Cardiac septum (tissue), 1 donor: ENCODE measurements at regions of chr15 and their contacts with region 1.

Region 1: GRCh38 chr15:81225161-81225671 is 28.5 kb downstream of the IL16 start:
- DNase-seq: no peak

Region 2: DNA sequence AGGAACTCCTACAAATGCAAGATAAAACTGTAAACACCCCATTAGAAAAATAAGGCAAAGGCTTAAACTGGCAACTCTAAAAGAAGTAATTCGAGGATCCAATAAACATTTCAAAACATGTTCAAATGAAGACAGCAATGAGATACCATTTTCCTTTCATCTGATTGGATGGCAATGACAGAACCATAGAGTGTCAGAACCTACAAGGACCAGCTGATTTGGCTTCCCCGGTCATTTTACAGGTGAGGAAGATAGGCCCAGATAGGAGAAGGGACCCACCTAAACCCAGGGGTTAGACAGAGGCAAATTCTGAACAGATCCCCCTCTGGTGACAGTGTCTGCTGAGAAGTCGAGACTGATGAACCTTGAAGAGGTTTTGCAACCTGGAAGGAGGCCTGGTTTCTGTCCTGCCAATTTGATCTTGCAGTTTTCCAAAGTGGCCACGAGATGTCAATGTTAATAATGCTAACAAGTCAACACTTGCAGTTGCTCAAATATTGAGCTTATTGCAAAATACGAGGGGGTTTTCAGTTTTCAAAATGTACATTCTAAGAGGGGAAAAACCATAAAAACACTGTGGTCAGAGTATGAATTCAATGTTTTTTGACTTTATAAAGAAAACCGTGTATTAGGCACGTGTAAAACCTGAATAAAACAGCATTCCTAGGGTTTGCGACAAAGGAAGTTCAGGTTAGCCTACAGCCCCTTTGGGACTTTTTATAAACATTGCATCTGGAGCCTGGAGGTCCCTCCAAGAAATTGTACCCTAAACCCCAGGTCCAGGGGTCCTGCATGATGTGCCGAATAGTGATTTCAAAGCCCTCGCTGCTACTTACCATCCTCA is 69.6 kb before region 1 on chr15:
- intact Hi-C with region 1: loop called (anchors 2 kb)
- DNase-seq: no peak

Region 3: GRCh38 chr15:81189583-81190283 is 35.5 kb before region 1 on chr15:
- intact Hi-C with region 1: loop called (anchors 5 kb)
- DNase-seq: no peak

Region 4: GRCh38 chr15:81449836-81450495 is 224.8 kb after region 1 on chr15:
- intact Hi-C with region 1: no loop called
- DNase-seq: no peak